ENCODE measurements at regions of chr2 and their contacts with region 1.

Region 1: GRCh38 chr2:118046634-118047210 is 32.9 kb upstream of the CCDC93 start:
- DNase-seq: peak; percentile 34
- CTCF ChIP-seq: peak; percentile 71

Region 2: DNA sequence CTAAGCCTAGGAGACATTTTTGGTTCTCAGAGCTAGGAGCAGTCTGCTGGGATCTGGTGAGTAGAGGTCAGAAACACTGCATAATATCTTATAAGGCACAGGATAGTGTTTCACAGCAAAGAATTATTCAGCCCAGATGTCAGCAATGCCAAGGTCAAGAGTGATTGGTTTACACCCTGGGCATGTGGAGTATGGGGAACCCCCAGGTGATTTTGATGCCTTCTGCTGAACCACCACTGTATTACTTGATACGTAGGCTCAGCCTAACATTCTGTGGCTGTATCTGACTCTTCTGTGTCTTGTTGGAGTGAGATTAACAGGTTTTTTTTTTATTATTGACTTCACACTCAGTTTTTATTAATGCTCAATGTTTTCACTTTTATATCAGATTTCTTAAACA is 226.3 kb before region 1 on chr2:
- CTCF ChIA-PET with region 1: no interaction called
- POLR2A ChIA-PET with region 1: no interaction called
- DNase-seq: no peak
- CTCF ChIP-seq: no peak

Region 3: GRCh38 chr2:118032169-118033013 is 14.3 kb before region 1 on chr2:
- CTCF ChIA-PET with region 1: interaction called, 486 read pairs
- POLR2A ChIA-PET with region 1: no interaction called
- DNase-seq: peak; percentile 57
- CTCF ChIP-seq: peak; percentile 84

Region 4: GRCh38 chr2:118077636-118078247 is 31.0 kb after region 1 on chr2:
- CTCF ChIA-PET with region 1: interaction called, 12 read pairs
- POLR2A ChIA-PET with region 1: no interaction called
- DNase-seq: no peak
- CTCF ChIP-seq: no peak

Region 5: DNA sequence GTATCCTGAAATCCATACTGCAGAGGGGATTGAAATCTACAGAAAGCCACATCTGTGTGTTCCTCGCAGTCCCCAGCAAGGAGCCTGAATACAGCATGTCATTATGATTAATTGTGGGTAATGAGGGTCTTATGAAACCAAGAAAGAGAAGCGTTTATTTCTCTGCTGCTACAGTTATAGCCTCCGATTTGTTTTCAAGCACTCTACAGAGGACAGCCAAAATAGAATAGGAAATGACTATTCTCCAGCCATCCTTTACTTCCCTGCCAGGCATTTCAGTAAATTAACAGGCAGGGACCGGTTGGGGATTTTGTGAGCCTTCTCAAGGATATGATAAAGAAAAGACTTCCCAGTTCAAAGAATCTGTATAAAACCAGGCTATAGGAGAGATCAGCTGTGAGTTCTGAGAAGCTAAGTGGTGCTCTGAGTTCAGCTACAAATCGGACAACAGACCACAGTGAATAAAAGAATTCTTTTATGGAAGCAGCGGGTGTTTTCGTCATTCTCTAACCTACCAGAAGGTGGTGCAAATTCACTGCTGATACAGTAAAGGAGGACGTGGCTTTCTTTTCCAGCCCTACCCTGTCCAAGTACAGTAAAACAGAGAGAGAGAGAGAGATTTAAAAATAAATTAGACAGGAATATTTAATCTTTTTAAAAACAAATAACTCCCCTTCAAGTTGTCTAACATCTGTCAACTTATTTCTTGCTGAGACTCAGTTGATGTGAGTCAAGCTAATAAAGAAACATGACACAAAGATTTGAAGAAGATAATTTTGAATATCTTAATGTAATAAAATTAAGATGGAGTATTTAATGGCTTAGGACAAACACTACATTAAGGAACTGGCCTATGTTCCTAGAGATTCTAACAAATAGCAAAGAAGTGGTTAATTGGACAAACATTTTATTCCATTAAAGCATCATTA is 175.2 kb after region 1 on chr2:
- CTCF ChIA-PET with region 1: interaction called, 10 read pairs
- POLR2A ChIA-PET with region 1: no interaction called
- DNase-seq: peak; percentile 50
- CTCF ChIP-seq: peak; percentile 60

Region 6: GRCh38 chr2:118855451-118856279 is 808.9 kb after region 1 on chr2:
- CTCF ChIA-PET with region 1: interaction called, 19 read pairs
- POLR2A ChIA-PET with region 1: no interaction called
- DNase-seq: peak; percentile 90
- CTCF ChIP-seq: peak; percentile 94

Measured in GM10248 (cell line).